SK-N-SH (cell line): ENCODE measurements at regions of chr7 and their contacts with region 1.

Region 1: DNA sequence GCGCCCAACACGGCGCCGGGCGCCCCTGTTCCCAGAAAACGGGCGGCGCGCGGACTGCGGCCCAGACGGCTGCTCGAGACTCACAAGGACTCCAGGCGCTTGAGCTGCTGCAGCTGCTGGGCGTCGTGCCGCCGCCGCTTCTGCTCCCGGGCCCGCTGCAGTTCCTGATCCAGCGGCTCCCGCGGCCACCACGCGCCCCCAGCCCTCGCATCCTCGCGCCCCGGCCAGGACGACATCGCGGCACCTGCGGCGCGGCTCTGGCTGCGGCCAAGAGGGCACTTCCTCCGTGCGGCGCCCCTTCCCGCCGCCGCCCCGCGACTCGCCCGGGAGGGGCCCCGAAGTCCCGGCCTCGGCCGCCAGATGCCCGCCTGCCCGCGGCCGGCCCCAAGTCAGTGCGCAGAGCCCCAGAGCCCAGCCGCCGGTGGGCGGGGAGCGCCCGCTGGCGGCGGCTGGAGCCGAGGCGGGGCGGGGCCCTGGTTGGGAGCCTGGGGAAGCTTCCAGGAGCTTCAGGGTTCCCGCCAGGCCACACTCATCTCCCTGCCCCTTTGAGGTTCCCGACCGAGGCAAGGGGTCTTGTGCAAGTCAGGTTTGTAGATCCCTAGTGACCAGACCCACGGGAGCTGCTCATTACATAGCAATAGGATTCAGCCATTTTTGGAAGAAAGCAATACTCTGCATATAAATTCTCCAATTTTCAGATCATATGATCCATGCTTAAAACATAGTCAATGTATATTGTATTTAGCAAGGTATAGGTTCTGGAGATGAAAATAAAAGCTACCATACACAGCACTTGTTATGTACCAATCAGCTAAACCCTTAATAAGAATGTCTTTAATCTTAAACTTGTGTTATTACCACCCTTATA is 14.2 kb upstream of the FKBP9 start:
- DNase-seq: peak; percentile 99
- H3K4me3 ChIP-seq: peak overlapping the region; percentile 71 to 82
- H3K27ac ChIP-seq: peak overlapping the region; percentile 81 to 91
- H3K4me1 ChIP-seq: peaks cover 3 to 10% of the 10 kb centered on the region in 2 experiments; a peak in 3 of 4 replicates
- H3K27me3 ChIP-seq: no peaks in the 10 kb centered on the region
- CTCF ChIP-seq: peak; percentile 64
- EP300 ChIP-seq: no peak; a peak in 3 of 4 replicates
- RAD21 ChIP-seq: peak; percentile 74

Region 2: GRCh38 chr7:31963569-31964175 is 979.3 kb before region 1 on chr7:
- CTCF ChIA-PET with region 1: no interaction called
- POLR2A ChIA-PET with region 1: no interaction called
- DNase-seq: no peak
- H3K4me3 ChIP-seq: no peak overlapping the region
- H3K27ac ChIP-seq: no peak overlapping the region
- H3K4me1 ChIP-seq: no peaks in the 10 kb centered on the region; a peak in 1 of 4 replicates
- H3K27me3 ChIP-seq: no peaks in the 10 kb centered on the region
- CTCF ChIP-seq: no peak
- EP300 ChIP-seq: no peak
- RAD21 ChIP-seq: no peak

Region 3: DNA sequence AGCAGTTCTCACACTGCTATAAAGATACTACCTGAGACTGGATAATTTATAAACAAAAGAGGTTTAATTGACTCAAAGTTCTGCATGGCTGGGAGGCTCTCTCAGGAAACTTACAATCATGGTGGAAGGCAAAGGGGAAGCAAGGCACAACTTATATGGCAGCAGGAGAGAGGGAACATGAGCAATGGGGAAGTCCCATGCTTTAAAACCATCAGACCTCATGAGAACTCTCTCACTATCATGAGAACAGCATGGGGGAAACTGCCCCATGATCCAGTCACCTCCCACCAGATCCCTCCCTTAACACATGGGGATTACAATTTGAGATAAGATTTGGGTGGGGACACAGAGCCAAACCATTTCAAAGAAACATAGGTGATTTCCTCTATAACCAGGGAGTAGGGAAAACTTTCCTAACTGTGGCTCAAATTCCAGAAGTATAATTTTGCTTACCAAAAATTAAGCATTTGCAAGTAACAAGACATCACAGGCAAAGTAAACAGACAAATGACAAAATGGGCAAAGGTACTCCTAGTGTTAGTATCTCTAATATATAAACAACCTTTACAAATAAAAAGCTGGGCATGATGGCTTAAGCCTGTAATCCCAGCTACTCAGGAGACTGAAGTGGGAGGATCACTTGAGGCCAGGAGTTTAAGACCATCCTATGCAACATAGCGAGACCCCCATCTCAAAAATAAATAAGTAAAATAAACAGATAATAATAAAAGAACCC is 139.4 kb before region 1 on chr7:
- CTCF ChIA-PET with region 1: interaction called, 10 read pairs
- POLR2A ChIA-PET with region 1: no interaction called
- DNase-seq: no peak
- H3K4me3 ChIP-seq: no peak overlapping the region
- H3K27ac ChIP-seq: no peak overlapping the region
- H3K4me1 ChIP-seq: no peaks in the 10 kb centered on the region; a peak in 1 of 4 replicates
- H3K27me3 ChIP-seq: no peaks in the 10 kb centered on the region
- CTCF ChIP-seq: no peak
- EP300 ChIP-seq: no peak
- RAD21 ChIP-seq: no peak

Region 4: DNA sequence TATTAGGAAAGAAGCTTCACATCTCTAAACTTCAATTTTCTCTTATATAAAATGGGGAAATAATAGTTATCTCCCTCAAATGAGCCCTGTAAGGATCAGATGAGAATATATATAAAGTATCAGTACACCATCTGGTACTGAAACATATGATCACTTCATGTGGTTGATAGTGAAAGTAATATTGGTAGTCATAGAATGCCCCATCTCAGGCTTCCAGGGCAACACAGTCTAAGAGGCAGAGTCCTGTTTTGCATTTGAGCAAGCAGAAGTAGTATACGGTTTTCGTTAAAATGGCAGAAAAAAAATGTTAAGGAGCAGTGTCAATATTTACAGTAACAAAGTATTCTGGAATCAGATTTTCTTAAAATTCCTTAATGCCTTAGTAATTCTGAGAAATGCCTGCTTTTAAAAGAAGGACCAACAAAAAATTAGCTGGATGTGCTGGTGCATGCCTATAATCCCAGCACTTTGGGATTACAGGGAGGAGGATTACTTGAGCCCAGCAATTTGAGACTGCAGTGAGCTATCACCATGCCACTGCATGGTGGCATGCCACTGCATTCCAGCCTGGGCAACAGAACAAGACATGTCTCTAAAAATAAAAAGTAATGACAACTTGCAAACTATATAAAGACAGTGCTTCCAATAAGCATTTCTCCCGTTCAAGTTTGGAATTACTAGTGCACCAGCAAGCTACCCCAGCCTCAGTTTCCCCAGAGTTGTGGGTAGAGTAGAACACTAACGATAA is 71.2 kb before region 1 on chr7:
- CTCF ChIA-PET with region 1: interaction called, 10 read pairs
- POLR2A ChIA-PET with region 1: no interaction called
- DNase-seq: no peak
- H3K4me3 ChIP-seq: no peak overlapping the region
- H3K27ac ChIP-seq: no peak overlapping the region
- H3K4me1 ChIP-seq: no peaks in the 10 kb centered on the region
- H3K27me3 ChIP-seq: no peaks in the 10 kb centered on the region
- CTCF ChIP-seq: no peak
- EP300 ChIP-seq: no peak
- RAD21 ChIP-seq: no peak

Region 5: GRCh38 chr7:32891800-32892520 is 51.1 kb before region 1 on chr7:
- CTCF ChIA-PET with region 1: interaction called, 17 read pairs
- POLR2A ChIA-PET with region 1: interaction called, 18 read pairs
- DNase-seq: peak; percentile 96
- H3K4me3 ChIP-seq: peak overlapping the region; percentile 78 to 86
- H3K27ac ChIP-seq: peak overlapping the region; percentile 98 to 99
- H3K4me1 ChIP-seq: peaks cover 26 to 30% of the 10 kb centered on the region in 2 experiments; a peak in 3 of 4 replicates
- H3K27me3 ChIP-seq: no peaks in the 10 kb centered on the region
- CTCF ChIP-seq: no peak
- EP300 ChIP-seq: peak; percentile 45 to 47; a peak in 2 of 4 replicates
- RAD21 ChIP-seq: no peak

Region 6: GRCh38 chr7:32905175-32905662 is 37.8 kb before region 1 on chr7:
- CTCF ChIA-PET with region 1: interaction called, 11 read pairs
- POLR2A ChIA-PET with region 1: interaction called, 3 read pairs
- DNase-seq: peak; percentile 83
- H3K4me3 ChIP-seq: peak overlapping the region; percentile 35 to 36
- H3K27ac ChIP-seq: peak overlapping the region; percentile 46 to 51; a peak in 3 of 4 replicates
- H3K4me1 ChIP-seq: peaks cover 0 to 2% of the 10 kb centered on the region in 2 experiments; a peak in 1 of 4 replicates
- H3K27me3 ChIP-seq: no peaks in the 10 kb centered on the region
- CTCF ChIP-seq: no peak
- EP300 ChIP-seq: no peak
- RAD21 ChIP-seq: peak; percentile 39

Region 7: DNA sequence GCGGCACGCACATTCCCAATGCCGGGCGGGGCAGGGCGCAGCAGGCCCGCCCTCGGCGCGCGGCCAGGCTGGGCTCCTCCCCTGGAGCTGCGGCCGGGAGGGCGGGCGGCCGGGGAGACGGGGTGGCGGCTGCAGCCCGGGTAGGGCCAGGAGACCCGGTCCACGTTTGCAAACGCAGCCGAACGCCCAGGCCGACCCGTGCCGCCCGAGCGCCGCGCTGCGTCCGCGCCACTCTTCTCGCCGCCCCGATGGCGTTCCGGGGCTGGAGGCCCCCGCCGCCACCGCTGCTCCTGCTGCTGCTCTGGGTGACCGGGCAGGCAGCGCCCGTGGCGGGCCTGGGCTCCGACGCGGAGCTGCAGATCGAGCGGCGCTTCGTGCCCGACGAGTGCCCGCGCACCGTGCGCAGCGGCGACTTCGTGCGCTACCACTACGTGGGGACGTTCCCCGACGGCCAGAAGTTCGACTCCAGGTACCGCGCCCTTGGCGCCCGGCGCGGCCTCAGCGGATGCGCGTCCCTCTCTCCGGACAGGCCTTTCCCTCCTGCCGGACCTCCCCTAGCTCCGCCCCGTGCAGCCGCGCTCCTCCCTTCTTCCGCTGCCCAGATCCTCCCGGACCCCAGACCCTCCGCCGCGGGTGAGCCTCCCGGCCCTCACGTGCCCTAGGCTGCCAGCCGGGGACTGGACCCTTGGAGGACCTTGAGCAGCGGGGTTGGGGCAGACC is 14.5 kb after region 1 on chr7 and contains the start of gene FKBP9:
- CTCF ChIA-PET with region 1: interaction called, 18 read pairs
- POLR2A ChIA-PET with region 1: interaction called, 16 read pairs
- DNase-seq: peak; percentile 99
- H3K4me3 ChIP-seq: peak within 1 kb of the TSS; percentile 81 to 89
- H3K27ac ChIP-seq: peak within 1 kb of the TSS; percentile 65 to 92
- H3K4me1 ChIP-seq: peaks cover 0 to 13% of the 10 kb centered on the region in 2 experiments; a peak in 1 of 4 replicates
- H3K27me3 ChIP-seq: no peaks in the 10 kb centered on the region
- CTCF ChIP-seq: no peak
- EP300 ChIP-seq: 0 out of 4 replicates have a peak, but pooled peaks of 1 of the 2 experiments have one; percentile 8
- RAD21 ChIP-seq: no peak
- polyA plus RNA-seq, gene FKBP9: 211 and 219 TPM in 2 replicates